A673 (cell line): ENCODE measurements at regions of chr3 and their contacts with region 1.

Region 1: DNA sequence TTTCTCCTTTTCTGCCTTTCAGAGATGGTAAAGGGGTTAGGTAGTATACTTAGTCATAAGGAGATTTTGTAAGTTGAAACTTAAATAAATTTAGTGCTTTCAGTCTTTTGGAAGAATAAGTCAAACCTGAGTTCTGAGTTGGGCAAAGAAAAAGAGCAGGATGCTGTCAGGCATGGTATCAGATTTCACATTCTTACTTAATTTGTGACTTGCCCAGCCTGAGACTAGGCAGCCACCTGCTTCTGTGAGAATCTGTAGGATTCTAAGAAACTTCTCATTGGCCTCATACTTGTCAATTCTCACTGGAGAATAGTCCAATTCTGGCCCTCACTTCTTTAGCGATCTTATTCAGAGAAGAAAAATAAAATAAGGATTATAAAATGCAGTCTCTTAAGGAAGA is 577.5 kb downstream of the DIPK2A start:
- DNase-seq: peak; percentile 39
- H3K4me3 ChIP-seq: no peak overlapping the region
- H3K27ac ChIP-seq: no peak overlapping the region
- H3K4me1 ChIP-seq: peaks cover 12% of the 10 kb centered on the region
- H3K27me3 ChIP-seq: no peaks in the 10 kb centered on the region
- CTCF ChIP-seq: no peak

Region 2: DNA sequence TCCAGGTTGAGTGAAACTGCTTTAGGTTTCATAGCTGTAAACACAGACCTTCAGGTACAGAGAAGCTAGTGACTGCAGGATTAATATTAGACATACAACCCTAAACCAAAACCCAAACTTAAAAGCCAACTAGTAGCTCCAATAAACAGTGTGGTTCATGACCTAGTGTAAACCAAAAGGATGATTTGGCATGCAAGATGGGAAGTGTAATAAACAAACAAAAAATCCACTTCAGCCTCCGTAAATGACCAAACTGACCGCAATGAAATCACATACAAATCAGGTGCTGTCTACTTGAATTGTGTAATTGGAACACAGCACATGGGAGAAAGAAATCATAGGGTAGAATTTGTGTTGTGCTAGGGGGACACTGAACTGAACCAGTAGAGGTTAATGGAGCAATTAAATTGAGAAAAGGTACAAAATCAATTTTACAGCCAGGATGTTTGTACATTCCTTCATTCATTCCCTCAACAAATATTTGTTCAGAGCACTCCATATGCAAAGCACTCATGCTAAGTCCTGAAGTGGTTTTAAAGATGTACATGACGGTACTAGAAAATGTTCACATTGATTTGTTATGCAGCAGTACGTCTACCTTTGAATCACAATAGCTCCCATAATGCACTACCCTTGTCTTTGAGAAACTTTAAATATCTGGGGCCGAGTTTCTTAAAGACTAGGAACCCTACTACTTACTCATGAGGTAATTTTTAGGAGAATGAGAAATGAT is 1451.0 kb before region 1 on chr3:
- CTCF ChIA-PET with region 1: no interaction called
- POLR2A ChIA-PET with region 1: interaction called, 12 read pairs
- intact Hi-C with region 1: no loop called
- DNase-seq: no peak
- H3K4me3 ChIP-seq: no peak overlapping the region
- H3K27ac ChIP-seq: no peak overlapping the region
- H3K4me1 ChIP-seq: no peaks in the 10 kb centered on the region
- H3K27me3 ChIP-seq: peaks cover 5% of the 10 kb centered on the region
- CTCF ChIP-seq: no peak

Region 3: DNA sequence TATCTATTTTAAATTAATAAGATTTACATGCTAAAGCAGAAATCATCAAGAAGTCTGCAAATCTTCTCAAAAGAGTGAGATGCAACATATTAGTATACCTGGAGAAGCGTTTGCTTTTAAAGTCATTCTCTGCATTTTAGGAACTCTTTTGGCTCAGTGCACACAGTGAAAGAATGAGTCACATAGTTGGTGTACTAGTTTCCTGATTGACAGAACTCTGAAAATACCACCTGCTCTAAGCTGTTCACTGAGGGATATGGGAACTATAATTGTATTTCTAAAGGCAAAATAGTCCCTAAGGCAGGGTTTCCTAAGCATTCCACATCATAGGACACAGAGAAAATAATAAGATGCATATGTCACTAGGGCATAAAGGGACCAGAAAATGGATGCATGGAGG is 261.0 kb after region 1 on chr3:
- CTCF ChIA-PET with region 1: interaction called, 11 read pairs
- POLR2A ChIA-PET with region 1: no interaction called
- intact Hi-C with region 1: no loop called
- DNase-seq: no peak
- H3K4me3 ChIP-seq: no peak overlapping the region
- H3K27ac ChIP-seq: no peak overlapping the region
- H3K4me1 ChIP-seq: no peaks in the 10 kb centered on the region
- H3K27me3 ChIP-seq: no peaks in the 10 kb centered on the region
- CTCF ChIP-seq: no peak